Cardiac septum (tissue), 1 donor: ENCODE measurements at regions of chr14 and their contacts with region 1.

Region 1: GRCh38 chr14:80954687-80955299 is 628 bp upstream of the TSHR start:
- DNase-seq: peak; percentile 91

Region 2: GRCh38 chr14:80987235-80988032 is 32.6 kb after region 1 on chr14:
- intact Hi-C with region 1: loop called (anchors 1 kb)
- DNase-seq: no peak

Region 3: GRCh38 chr14:81009346-81009745 is 54.6 kb after region 1 on chr14:
- intact Hi-C with region 1: no loop called
- DNase-seq: no peak